H1 (cell line): ENCODE measurements at regions of chr9 and their contacts with region 1.

Region 1: GRCh38 chr9:92254381-92255337 is 38.8 kb downstream of the IARS1 start:
- DNase-seq: no peak
- H3K4me3 ChIP-seq: no peak overlapping the region
- H3K27ac ChIP-seq: no peak overlapping the region
- H3K4me1 ChIP-seq: no peaks in the 10 kb centered on the region
- H3K27me3 ChIP-seq: no peaks in the 10 kb centered on the region
- CTCF ChIP-seq: no peak
- EP300 ChIP-seq: no peak
- POLR2A ChIP-seq: no peak
- RAD21 ChIP-seq: no peak

Region 2: DNA sequence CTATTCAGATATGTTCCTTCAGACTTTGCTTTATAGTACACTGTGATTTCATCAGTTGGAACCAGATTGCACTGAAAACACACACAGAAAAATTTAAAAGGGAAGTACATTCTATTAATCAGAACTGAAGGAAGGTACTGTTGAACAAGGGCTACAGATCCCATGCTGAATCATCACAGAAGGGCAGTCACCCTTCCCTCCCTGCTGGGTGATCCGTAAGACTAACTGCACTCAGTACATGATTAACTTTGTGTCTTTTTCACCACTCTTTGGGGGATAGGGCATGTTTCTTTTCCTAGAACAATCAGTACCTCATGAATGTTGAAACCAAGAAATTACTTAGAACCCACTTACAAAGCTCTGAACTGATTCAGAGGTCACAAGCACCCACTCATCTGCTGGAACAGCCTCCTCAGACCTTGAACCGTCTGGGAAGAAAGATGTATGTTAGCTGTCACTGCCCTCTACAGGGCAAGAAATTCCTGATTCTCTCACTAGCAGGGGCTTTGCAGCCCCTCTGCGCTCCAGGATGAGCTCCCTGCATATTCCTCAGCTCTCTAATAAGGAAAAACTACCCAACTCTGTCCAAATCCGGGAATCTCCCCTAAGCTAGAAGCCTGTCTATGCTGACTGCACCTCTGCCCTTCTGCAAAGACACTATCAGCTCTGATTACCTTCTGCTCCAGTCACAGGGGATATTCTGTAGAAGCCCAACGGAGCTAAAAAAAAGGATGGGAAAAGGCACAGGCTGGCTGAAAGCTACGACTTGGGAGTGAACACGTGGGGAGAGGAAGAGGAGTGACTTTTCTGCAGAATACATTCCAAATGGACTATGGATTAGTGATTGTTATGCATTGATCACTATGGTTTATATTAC is 12.2 kb before region 1 on chr9:
- CTCF ChIA-PET with region 1: interaction called, 3 read pairs
- POLR2A ChIA-PET with region 1: interaction called, 14 read pairs
- DNase-seq: no peak
- H3K4me3 ChIP-seq: no peak overlapping the region
- H3K27ac ChIP-seq: no peak overlapping the region
- H3K4me1 ChIP-seq: no peaks in the 10 kb centered on the region
- H3K27me3 ChIP-seq: no peaks in the 10 kb centered on the region
- CTCF ChIP-seq: peak in 2 of 3 experiments; percentile 34 to 39; a peak in 3 of 4 replicates
- EP300 ChIP-seq: no peak
- POLR2A ChIP-seq: no peak
- RAD21 ChIP-seq: peak; percentile 29 to 57

Region 3: GRCh38 chr9:92265159-92265558 is 10.5 kb after region 1 on chr9:
- CTCF ChIA-PET with region 1: interaction called, 6 read pairs
- POLR2A ChIA-PET with region 1: interaction called, 16 read pairs
- DNase-seq: no peak
- H3K4me3 ChIP-seq: no peak overlapping the region
- H3K27ac ChIP-seq: no peak overlapping the region
- H3K4me1 ChIP-seq: no peaks in the 10 kb centered on the region
- H3K27me3 ChIP-seq: no peaks in the 10 kb centered on the region
- CTCF ChIP-seq: no peak
- EP300 ChIP-seq: no peak
- POLR2A ChIP-seq: no peak
- RAD21 ChIP-seq: no peak

Region 4: GRCh38 chr9:92276331-92277032 is 21.8 kb after region 1 on chr9:
- CTCF ChIA-PET with region 1: interaction called, 3 read pairs
- POLR2A ChIA-PET with region 1: interaction called, 45 read pairs
- DNase-seq: no peak
- H3K4me3 ChIP-seq: no peak overlapping the region
- H3K27ac ChIP-seq: no peak overlapping the region
- H3K4me1 ChIP-seq: no peaks in the 10 kb centered on the region
- H3K27me3 ChIP-seq: no peaks in the 10 kb centered on the region
- CTCF ChIP-seq: no peak
- EP300 ChIP-seq: no peak
- POLR2A ChIP-seq: no peak
- RAD21 ChIP-seq: no peak

Region 5: DNA sequence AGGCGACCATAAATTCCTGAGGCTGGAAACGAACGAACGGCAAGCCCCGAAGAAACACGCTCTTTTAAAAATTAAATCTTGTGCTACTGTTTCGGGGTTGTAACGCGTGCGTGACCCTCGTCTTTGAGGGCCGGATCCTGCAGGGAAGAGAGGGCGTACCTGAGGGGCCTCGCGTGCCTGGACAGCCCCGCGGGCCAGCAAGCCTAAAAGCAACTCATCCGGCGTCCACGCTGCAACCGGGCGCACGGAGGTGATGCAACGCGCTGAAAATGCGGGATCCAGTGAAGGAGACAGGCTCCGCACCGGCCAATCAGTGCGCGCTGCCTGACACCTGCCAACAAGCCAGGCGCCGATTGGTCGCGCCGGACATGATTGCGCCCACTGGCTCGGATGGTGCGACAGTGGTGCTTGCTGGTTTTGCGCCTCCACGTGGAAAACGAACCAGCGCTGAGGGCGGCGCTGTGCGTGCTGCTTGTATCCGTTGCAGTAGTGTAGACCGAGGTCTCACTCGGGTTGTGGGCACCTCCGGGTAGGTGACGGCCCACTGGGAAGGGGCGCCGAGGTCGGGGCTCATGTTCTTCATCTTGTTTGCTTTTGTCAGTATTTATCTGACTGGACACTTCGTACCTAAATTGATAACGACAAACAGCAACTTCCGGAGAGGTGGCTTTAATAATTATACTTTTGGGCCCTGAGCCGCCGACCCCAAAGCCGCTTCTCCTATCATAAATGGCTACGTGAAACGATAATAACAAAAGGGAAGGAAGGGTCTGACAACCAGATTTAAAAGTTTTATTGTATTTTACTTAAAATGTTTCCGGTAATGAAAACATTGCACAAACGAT is 39.0 kb after region 1 on chr9 and contains the start of gene IARS1:
- CTCF ChIA-PET with region 1: no interaction called
- POLR2A ChIA-PET with region 1: interaction called, 13 read pairs
- DNase-seq: peak; percentile 95 to 100
- H3K4me3 ChIP-seq: peak within 1 kb of the TSS; percentile 86 to 95 (median 92)
- H3K27ac ChIP-seq: peak within 1 kb of the TSS; percentile 88
- H3K4me1 ChIP-seq: peaks cover 0 to 3% (median 2%) of the 10 kb centered on the region in 4 experiments; a peak in 3 of 7 replicates
- H3K27me3 ChIP-seq: no peaks in the 10 kb centered on the region
- CTCF ChIP-seq: peak in 2 of 3 experiments; percentile 34 to 38; a peak in 2 of 4 replicates
- EP300 ChIP-seq: no peak
- POLR2A ChIP-seq: peak; percentile 87 to 93
- RAD21 ChIP-seq: no peak
- total RNA-seq, gene IARS1: 224 and 243 TPM in 2 replicates